Endothelial cell of umbilical vein (primary cell): ENCODE measurements at regions of chr20 and their contacts with region 1.

Region 1: DNA sequence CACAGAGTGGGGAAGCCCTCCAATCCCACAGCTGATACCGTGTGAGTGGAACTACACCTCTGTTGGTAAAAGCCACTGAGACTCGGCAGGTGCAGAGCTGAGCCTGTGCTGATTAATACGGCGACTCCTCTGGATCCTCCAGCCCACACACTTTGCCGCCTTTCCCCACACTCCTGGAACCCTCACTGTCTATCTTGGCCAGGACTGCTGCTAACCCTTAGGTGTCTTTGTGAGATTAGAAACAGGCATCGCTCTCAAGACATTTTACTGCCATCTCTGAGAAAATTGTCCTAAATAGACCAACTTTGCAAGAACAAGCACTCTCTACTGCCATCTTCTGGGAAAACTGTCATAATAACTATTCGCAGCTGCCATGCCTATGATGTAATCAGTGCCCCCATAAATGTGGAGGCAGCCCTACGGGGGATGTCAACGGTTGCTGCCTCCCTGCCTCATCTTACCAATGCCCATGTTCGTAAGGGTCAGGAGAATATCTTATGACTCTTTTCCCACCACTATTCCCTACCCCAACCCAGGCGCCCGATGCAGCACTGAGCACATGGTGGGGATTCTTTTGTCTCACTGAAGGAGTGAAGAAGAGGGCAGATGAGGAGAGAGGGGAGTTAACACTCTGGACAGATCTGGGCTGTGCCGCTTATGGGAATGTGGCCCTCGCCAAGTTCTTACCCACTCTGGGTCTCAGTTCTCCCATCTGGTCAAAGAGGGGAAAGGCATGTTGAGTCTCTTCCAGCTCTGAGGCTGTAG is 26.1 kb upstream of the KCNB1 start:
- DNase-seq: peak; percentile 44
- H3K4me3 ChIP-seq: no peak overlapping the region
- H3K27ac ChIP-seq: no peak overlapping the region
- H3K4me1 ChIP-seq: no peaks in the 10 kb centered on the region
- H3K27me3 ChIP-seq: peaks cover 4 to 8% of the 10 kb centered on the region in 2 experiments
- CTCF ChIP-seq: peak; percentile 35 to 46
- POLR2A ChIP-seq: no peak

Region 2: DNA sequence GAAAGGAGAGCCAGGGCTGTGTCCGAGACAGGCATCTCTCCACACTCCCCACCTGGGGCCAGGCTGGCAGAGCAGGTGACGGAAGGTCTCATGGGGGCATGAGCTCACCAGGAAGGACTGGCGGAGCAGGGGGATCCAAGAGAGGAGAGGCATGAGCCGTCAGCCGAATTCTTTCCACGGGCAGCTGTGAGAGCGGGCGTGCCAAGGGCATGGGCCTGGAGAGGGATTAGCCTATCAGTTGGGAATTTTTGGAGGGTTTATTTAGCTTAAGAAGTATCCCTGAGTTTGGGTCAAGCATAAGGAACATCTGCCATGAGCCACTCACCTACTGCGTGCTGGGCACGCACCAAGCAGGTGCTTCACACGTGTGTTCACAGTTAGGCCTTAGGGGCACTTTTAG is 170.6 kb before region 1 on chr20:
- CTCF ChIA-PET with region 1: interaction called, 77 read pairs
- POLR2A ChIA-PET with region 1: no interaction called
- dilution Hi-C with region 1: no loop called
- intact Hi-C with region 1: loop called (anchors 1 kb)
- DNase-seq: no peak
- H3K4me3 ChIP-seq: no peak overlapping the region
- H3K27ac ChIP-seq: no peak overlapping the region
- H3K4me1 ChIP-seq: no peaks in the 10 kb centered on the region
- H3K27me3 ChIP-seq: peaks cover 0 to 2% of the 10 kb centered on the region in 2 experiments
- CTCF ChIP-seq: no peak
- POLR2A ChIP-seq: no peak

Region 3: GRCh38 chr20:49384437-49385088 is 124.1 kb before region 1 on chr20:
- CTCF ChIA-PET with region 1: interaction called, 57 read pairs
- POLR2A ChIA-PET with region 1: no interaction called
- dilution Hi-C with region 1: no loop called
- intact Hi-C with region 1: loop called (anchors 2 kb)
- DNase-seq: peak; percentile 56
- H3K4me3 ChIP-seq: no peak overlapping the region
- H3K27ac ChIP-seq: no peak overlapping the region
- H3K4me1 ChIP-seq: no peaks in the 10 kb centered on the region
- H3K27me3 ChIP-seq: peaks cover 0 to 3% of the 10 kb centered on the region in 2 experiments
- CTCF ChIP-seq: peak; percentile 83 to 84
- POLR2A ChIP-seq: no peak

Region 4: GRCh38 chr20:49496553-49497397 is 11.8 kb before region 1 on chr20:
- CTCF ChIA-PET with region 1: interaction called, 24 read pairs
- POLR2A ChIA-PET with region 1: no interaction called
- dilution Hi-C with region 1: no loop called
- intact Hi-C with region 1: no loop called
- DNase-seq: no peak
- H3K4me3 ChIP-seq: no peak overlapping the region
- H3K27ac ChIP-seq: no peak overlapping the region
- H3K4me1 ChIP-seq: no peaks in the 10 kb centered on the region
- H3K27me3 ChIP-seq: peaks cover 14 to 15% of the 10 kb centered on the region in 2 experiments
- CTCF ChIP-seq: no peak
- POLR2A ChIP-seq: no peak

Region 5: GRCh38 chr20:49534255-49534712 is 25.7 kb after region 1 on chr20:
- CTCF ChIA-PET with region 1: interaction called, 10 read pairs
- POLR2A ChIA-PET with region 1: no interaction called
- dilution Hi-C with region 1: no loop called
- intact Hi-C with region 1: no loop called
- DNase-seq: peak; percentile 60
- H3K4me3 ChIP-seq: no peak overlapping the region
- H3K27ac ChIP-seq: no peak overlapping the region
- H3K4me1 ChIP-seq: no peaks in the 10 kb centered on the region
- H3K27me3 ChIP-seq: peaks cover 0 to 2% of the 10 kb centered on the region in 2 experiments
- CTCF ChIP-seq: peak; percentile 71
- POLR2A ChIP-seq: no peak